ENCODE measurements at regions of chr12 and their contacts with region 1.

Region 1: GRCh38 chr12:112900299-112901145 is 6.2 kb upstream of the OAS1 start:
- DNase-seq: no peak
- ATAC-seq: peak; percentile 75
- H3K4me3 ChIP-seq: no peak overlapping the region
- H3K27ac ChIP-seq: no peak overlapping the region
- H3K4me1 ChIP-seq: peaks cover 6% of the 10 kb centered on the region
- H3K27me3 ChIP-seq: no peaks in the 10 kb centered on the region
- CTCF ChIP-seq: peak; percentile 68 to 84 (median 73)
- EP300 ChIP-seq: no peak
- POLR2A ChIP-seq: no peak
- RAD21 ChIP-seq: peak; percentile 82

Region 2: GRCh38 chr12:112932494-112933128 is 32.1 kb after region 1 on chr12:
- CTCF ChIA-PET with region 1: interaction called, 7 read pairs
- POLR2A ChIA-PET with region 1: no interaction called
- RAD21 ChIA-PET with region 1: interaction called, 5 read pairs
- SMC1A ChIA-PET with region 1: interaction called, 27 read pairs
- in situ Hi-C with region 1: no loop called
- intact Hi-C with region 1: no loop called
- DNase-seq: no peak
- ATAC-seq: no peak
- H3K4me3 ChIP-seq: no peak overlapping the region
- H3K27ac ChIP-seq: no peak overlapping the region
- H3K4me1 ChIP-seq: no peaks in the 10 kb centered on the region; the same call in 1 of the 2 replicates
- H3K27me3 ChIP-seq: no peaks in the 10 kb centered on the region
- CTCF ChIP-seq: no peak
- EP300 ChIP-seq: no peak
- POLR2A ChIP-seq: no peak
- RAD21 ChIP-seq: no peak

Region 3: DNA sequence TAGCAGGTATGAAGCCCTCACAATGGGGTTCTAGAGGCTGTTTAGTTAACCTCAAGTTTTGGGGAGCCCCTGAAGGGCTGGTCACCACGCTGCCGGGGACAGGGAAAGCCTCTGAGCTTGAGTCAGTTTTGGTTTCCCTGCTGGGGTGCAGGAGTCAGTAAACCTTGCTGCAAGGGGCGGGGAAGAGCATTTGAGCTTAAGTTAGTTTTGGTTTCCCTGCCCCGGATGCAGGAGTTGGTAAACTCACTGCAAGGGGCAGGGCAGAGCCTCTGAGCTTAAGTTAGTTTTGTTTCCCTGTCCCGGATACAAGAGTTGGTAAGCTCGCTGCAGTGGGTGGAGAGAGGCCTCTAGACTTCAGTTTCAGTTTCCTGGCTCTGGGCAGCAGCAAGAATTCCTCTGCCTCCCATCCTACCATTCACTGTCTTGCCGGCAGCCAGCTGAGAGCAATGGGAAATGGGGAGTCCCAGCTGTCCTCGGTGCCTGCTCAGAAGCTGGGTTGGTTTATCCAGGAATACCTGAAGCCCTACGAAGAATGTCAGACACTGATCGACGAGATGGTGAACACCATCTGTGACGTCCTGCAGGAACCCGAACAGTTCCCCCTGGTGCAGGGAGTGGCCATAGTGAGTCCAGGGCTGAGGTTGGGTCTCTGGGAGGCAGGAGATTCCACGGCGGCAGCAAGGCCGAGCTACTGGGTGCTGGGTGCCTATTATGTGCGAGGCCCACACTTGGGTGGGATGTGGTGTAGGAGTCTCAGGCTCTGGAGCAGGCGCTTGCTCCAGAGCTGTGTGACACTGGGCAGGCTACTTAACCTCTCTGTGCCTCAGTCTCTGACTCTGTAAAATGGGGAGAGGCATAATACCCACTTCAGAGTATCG is 77.9 kb after region 1 on chr12 and contains the start of gene OAS2:
- CTCF ChIA-PET with region 1: interaction called, 16 read pairs
- POLR2A ChIA-PET with region 1: interaction called, 69 read pairs
- RAD21 ChIA-PET with region 1: interaction called, 47 read pairs
- SMC1A ChIA-PET with region 1: interaction called, 99 read pairs
- in situ Hi-C with region 1: no loop called
- intact Hi-C with region 1: no loop called
- DNase-seq: peak; percentile 94
- ATAC-seq: peak; percentile 92
- H3K4me3 ChIP-seq: peak within 1 kb of the TSS; percentile 97
- H3K27ac ChIP-seq: peak within 1 kb of the TSS; percentile 100
- H3K4me1 ChIP-seq: peaks cover 13% of the 10 kb centered on the region
- H3K27me3 ChIP-seq: no peaks in the 10 kb centered on the region
- CTCF ChIP-seq: no peak
- EP300 ChIP-seq: peak in 1 of 2 experiments; percentile 11; a peak in 1 of 4 replicates
- POLR2A ChIP-seq: peak; percentile 88
- RAD21 ChIP-seq: no peak
- polyA plus RNA-seq, gene OAS2: 32.4 to 43.4 TPM

Region 4: DNA sequence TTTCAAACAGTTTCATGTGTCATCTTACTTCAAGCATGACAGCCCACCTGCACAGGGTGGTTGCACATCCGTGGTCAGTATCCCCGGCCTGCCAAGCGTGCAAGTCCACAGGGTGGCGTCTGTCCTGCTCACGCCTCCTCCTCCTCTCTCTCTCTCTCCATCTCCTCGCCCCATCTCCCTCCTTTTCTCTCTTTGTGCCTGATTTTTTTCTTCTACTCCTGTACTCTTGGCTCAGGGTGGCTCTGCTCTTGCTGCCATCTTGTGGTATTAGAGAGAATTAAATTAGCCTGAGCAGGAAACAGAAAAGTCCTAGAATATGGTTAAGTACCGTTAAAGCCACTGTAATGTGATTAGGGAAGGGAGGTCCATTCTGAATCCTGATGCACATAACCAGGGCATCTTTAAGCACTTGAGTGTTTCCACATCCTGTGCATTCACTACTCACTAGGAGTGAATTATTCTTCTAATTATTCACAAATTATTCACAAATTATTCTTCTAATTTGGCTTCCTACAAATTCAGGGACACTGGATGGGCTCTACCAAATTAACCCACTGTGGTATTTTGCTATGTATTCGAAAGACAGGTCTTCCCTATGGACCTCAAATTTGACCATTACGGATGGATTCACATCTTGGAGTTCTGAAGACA is 130.5 kb after region 1 on chr12:
- CTCF ChIA-PET with region 1: interaction called, 37 read pairs
- POLR2A ChIA-PET with region 1: interaction called, 6 read pairs
- RAD21 ChIA-PET with region 1: interaction called, 17 read pairs
- SMC1A ChIA-PET with region 1: interaction called, 18 read pairs
- in situ Hi-C with region 1: no loop called
- intact Hi-C with region 1: loop called (anchors 2 kb)
- DNase-seq: no peak
- ATAC-seq: peak; percentile 84
- H3K4me3 ChIP-seq: no peak overlapping the region
- H3K27ac ChIP-seq: no peak overlapping the region
- H3K4me1 ChIP-seq: no peaks in the 10 kb centered on the region
- H3K27me3 ChIP-seq: no peaks in the 10 kb centered on the region
- CTCF ChIP-seq: peak; percentile 65 to 67 (median 65)
- EP300 ChIP-seq: no peak
- POLR2A ChIP-seq: no peak
- RAD21 ChIP-seq: peak; percentile 75

Measured in GM12878 (cell line).